Activated T-helper 1 cell treated with anti-CD3 and anti-CD28 coated beads, Interleukin-12 subunit alpha, Interleukin-12 subunit beta, Interleukin-2, Interleukin-4 antibody, amounts not matched to agents 30 ng/mL and 10 ng/mL and 1 ng/mL, durations not matched to agents 14 hours and 24 hours and 36 hours (primary cell): ENCODE measurements at regions of chr19 and their contacts with region 1.

Region 1: DNA sequence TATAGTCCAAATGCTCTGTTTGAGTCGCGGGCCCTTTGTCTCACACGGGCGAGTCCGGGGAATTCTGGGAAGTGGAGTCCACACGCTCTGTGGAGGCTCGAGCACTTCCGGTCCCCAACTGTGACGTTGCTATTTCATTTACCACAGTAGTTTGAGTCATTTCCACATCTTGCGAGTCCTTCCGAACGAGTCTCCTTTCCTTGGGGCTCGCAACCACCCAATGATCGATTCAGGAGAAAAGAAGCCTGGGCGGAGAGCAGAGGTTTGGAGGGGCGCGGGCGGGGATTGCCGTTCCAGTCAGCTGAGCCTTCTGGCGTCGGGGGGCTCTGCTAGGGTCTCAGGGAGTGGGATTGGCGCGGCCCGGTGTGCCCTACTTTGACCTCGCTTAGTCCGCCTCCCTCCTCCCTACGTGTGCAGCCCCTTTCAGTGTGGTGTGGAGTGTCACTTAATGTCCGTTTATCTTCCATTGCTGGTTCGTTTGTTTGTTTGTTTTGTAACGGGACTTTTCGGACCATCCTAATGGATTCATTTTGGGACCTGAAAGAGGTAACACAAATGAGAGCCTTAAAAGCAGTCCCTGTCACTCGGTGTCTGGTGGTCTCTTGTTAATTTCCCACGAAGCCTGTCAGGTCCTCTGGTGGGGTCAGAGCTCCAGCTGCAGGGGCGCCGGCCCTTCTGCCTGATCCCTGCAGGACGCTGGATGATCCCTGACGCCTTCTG is at the start of gene ZNF222:
- DNase-seq: peak; percentile 69
- H3K4me3 Mint-ChIP-seq: peak within 1 kb of the TSS; percentile 96
- H3K27ac Mint-ChIP-seq: peak within 1 kb of the TSS; percentile 85
- H3K4me1 Mint-ChIP-seq: peaks cover 18% of the 10 kb centered on the region
- H3K27me3 Mint-ChIP-seq: no peaks in the 10 kb centered on the region
- total RNA-seq, gene ZNF222: 1.2 and 1.5 TPM in 2 replicates

Region 2: DNA sequence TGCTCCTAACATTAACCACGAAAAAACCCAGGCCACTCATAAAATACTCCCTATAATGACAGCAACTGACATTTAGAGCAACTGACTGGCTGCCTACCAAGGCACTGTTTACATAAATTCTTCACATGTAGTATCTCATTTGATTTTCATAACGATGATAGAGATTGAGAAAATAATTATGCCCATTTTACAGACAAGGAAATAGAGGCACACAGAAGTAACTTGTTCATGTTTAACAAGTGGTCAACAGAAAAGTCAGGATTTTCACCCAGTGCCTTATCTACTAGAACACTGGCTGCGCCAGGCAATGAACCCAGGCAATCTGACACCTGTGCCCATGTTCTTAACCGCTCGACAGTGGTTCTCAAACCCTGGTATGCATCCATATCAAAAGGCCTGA is 96.6 kb before region 1 on chr19:
- intact Hi-C with region 1: no loop called
- DNase-seq: no peak
- H3K4me3 Mint-ChIP-seq: no peak overlapping the region
- H3K27ac Mint-ChIP-seq: no peak overlapping the region
- H3K4me1 Mint-ChIP-seq: peaks cover 1% of the 10 kb centered on the region
- H3K27me3 Mint-ChIP-seq: no peaks in the 10 kb centered on the region

Region 3: DNA sequence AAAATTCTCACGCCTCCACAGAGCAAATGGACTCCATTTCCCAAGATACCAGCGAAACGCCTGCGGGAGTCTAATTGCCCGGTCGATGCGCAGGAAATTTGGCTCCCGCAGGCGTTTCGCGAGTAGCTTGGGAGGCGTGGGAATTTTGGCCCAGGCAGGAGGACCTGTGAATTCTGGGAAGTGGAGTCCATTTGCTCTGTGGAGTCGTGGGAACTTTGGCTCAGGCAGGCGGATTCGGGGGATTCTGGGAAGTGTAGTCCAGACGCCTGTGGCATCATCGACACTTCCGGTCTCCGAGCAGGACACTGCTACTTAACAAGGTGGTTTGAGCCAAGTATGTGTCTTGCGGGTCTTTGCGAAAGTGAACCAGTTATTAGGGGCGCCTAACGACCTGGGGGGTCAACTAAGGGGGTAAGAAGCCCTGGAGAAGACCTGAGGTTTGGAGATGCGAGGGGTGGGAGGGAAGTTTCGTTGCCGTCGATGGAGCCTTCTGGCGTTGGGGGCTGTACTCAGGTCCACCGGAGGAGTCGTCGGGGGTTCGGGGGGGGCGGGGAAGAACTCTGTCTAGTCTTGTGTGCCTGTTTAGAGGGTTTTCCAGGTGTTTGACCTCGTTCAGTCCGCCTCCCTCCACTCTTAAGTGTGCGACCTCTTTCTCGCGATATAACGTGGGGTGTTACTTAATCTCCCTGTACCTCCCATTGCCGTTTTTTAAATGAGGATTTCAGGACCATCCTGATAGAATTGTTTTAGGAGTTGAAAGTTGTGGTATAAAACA is 41.3 kb before region 1 on chr19 and contains the start of gene ZNF155:
- intact Hi-C with region 1: loop called (anchors 1 kb)
- DNase-seq: peak; percentile 56
- H3K4me3 Mint-ChIP-seq: peak within 1 kb of the TSS; percentile 94
- H3K27ac Mint-ChIP-seq: peak within 1 kb of the TSS; percentile 88
- H3K4me1 Mint-ChIP-seq: peaks cover 8% of the 10 kb centered on the region
- H3K27me3 Mint-ChIP-seq: no peaks in the 10 kb centered on the region
- total RNA-seq, gene ZNF155: 5.2 and 6.5 TPM in 2 replicates

Region 4: DNA sequence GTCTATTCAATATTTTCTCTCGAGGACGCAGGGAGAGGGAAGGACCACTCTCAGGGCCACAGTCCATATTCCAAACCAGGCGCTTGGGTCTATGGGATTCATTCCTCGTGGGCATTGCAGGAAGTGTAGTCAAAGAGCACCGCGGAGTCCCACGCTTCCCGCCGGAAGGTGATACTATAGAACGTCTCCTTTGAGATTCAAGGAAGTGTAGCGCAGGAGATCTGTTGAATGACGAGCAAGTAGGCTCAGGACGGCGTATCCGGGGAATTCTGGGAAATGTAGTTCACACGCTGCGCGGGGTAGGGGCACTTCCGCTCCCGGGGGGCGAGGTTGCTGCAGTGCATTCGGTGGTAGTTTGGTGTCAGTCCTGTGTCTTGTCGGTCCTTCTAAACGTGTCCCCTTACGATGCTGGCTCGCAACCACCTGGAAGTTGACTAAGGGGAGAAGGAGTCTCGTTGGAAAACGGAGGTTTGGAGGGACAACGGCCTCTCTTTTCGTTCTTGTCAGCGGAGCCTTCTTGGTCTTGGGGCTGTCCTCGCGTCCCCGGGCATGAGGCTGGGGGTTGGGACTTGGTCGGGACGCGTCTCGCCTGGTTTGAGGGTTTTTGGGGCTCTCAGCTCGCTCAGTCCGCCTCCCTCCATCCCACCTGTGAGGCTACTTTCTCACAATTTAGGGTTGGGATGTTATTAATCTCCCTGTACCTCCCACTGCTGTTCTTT is 46.6 kb after region 1 on chr19 and contains the start of gene ZNF284:
- intact Hi-C with region 1: loop called (anchors 1 kb)
- DNase-seq: peak; percentile 74
- H3K4me3 Mint-ChIP-seq: peak within 1 kb of the TSS; percentile 86
- H3K27ac Mint-ChIP-seq: peak within 1 kb of the TSS; percentile 79
- H3K4me1 Mint-ChIP-seq: peaks cover 17% of the 10 kb centered on the region
- H3K27me3 Mint-ChIP-seq: no peaks in the 10 kb centered on the region
- total RNA-seq, gene ZNF284: 1.3 and 1.4 TPM in 2 replicates

Region 5: GRCh38 chr19:44315883-44316282 is 290.5 kb after region 1 on chr19:
- intact Hi-C with region 1: no loop called
- DNase-seq: no peak
- H3K4me3 Mint-ChIP-seq: no peak overlapping the region
- H3K27ac Mint-ChIP-seq: no peak overlapping the region
- H3K4me1 Mint-ChIP-seq: no peaks in the 10 kb centered on the region
- H3K27me3 Mint-ChIP-seq: no peaks in the 10 kb centered on the region